ENCODE measurements at regions of chr16 and their contacts with region 1.

Region 1: GRCh38 chr16:74296432-74297144 is at the start of gene PSMD7:
- DNase-seq: peak; percentile 98
- total RNA-seq, gene PSMD7: 127 TPM

Region 2: GRCh38 chr16:74079232-74079586 is 217.4 kb before region 1 on chr16:
- intact Hi-C with region 1: no loop called
- DNase-seq: no peak

Region 3: GRCh38 chr16:74372953-74373846 is 76.6 kb after region 1 on chr16:
- intact Hi-C with region 1: loop called (anchors 5 kb)
- DNase-seq: no peak

Region 4: GRCh38 chr16:74606521-74607310 is 310.1 kb after region 1 on chr16 and contains the start of gene GLG1:
- intact Hi-C with region 1: loop called (anchors 5 kb)
- DNase-seq: peak; percentile 97
- total RNA-seq, gene GLG1: 110 TPM